ENCODE measurements at regions of chr15 and their contacts with region 1.

Region 1: GRCh38 chr15:42891569-42891968 is 29.0 kb downstream of the TTBK2 start:
- DNase-seq: no peak
- H3K4me3 Mint-ChIP-seq: no peak overlapping the region
- H3K27ac Mint-ChIP-seq: no peak overlapping the region
- H3K4me1 Mint-ChIP-seq: no peaks in the 10 kb centered on the region
- H3K27me3 Mint-ChIP-seq: no peaks in the 10 kb centered on the region

Region 2: GRCh38 chr15:42858540-42858939 is 33.0 kb before region 1 on chr15:
- intact Hi-C with region 1: loop called (anchors 1 kb)
- DNase-seq: no peak
- H3K4me3 Mint-ChIP-seq: no peak overlapping the region
- H3K27ac Mint-ChIP-seq: no peak overlapping the region
- H3K4me1 Mint-ChIP-seq: no peaks in the 10 kb centered on the region
- H3K27me3 Mint-ChIP-seq: no peaks in the 10 kb centered on the region

Region 3: GRCh38 chr15:43185157-43186017 is 293.8 kb after region 1 on chr15 and contains the start of gene CCNDBP1:
- intact Hi-C with region 1: no loop called
- DNase-seq: peak; percentile 88
- H3K4me3 Mint-ChIP-seq: peak within 1 kb of the TSS; percentile 96
- H3K27ac Mint-ChIP-seq: peak within 1 kb of the TSS; percentile 92
- H3K4me1 Mint-ChIP-seq: peaks cover 31% of the 10 kb centered on the region
- H3K27me3 Mint-ChIP-seq: no peaks in the 10 kb centered on the region
- total RNA-seq, gene CCNDBP1: 57.7 and 60.2 TPM in 2 replicates

Region 4: GRCh38 chr15:43346305-43346704 is 454.7 kb after region 1 on chr15:
- intact Hi-C with region 1: no loop called
- DNase-seq: no peak
- H3K4me3 Mint-ChIP-seq: no peak overlapping the region
- H3K27ac Mint-ChIP-seq: no peak overlapping the region
- H3K4me1 Mint-ChIP-seq: no peaks in the 10 kb centered on the region
- H3K27me3 Mint-ChIP-seq: no peaks in the 10 kb centered on the region

Measured in activated T-helper 1 cell treated with anti-CD3 and anti-CD28 coated beads, Interleukin-12 subunit alpha, Interleukin-12 subunit beta, Interleukin-2, Interleukin-4 antibody, amounts not matched to agents 30 ng/mL and 10 ng/mL and 1 ng/mL, durations not matched to agents 14 hours and 24 hours and 36 hours (primary cell).